ENCODE measurements at regions of chr1 and their contacts with region 1.

Region 1: GRCh38 chr1:40315239-40315794 is 1.8 kb downstream of the COL9A2 start:
- DNase-seq: peak; percentile 81
- H3K4me3 Mint-ChIP-seq: peak overlapping the region; percentile 61
- H3K27ac Mint-ChIP-seq: peak overlapping the region; percentile 26
- H3K4me1 Mint-ChIP-seq: peaks cover 54% of the 10 kb centered on the region
- H3K27me3 Mint-ChIP-seq: peaks cover 25% of the 10 kb centered on the region

Region 2: DNA sequence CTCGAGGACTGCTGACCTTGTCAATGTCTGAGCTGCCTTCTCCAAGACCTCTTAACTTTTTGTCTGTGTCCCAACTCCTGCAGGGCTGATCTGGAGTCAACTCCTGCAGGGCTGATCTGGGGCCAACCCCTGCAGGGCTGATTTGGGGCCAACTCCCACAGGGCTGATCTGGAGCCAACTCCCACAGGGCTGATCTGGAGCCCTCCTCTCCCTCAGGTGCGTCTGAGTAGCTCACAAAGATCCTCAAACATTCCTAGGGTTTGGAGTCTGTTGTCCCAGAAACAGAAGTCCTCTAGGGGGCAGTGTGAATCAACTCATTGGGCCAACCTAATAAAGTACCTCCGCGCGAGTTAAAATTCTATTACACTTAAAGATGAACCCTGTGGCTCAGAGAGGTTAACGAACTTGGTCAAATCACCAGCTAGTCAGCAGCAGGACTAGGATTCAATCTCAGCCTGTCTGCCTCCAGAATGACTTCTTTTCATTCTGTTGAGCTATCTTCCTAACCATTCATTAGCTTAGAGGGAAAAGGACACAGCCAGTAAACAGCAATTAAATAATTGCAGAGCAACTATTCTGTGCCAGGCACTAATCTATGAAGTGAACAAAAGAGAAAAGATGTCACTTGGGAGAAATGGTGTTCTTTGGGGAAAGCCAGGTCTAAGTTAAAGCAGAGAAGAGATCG is 171.3 kb before region 1 on chr1:
- CTCF ChIA-PET with region 1: interaction called, 12 read pairs
- POLR2A ChIA-PET with region 1: no interaction called
- DNase-seq: peak; percentile 71
- H3K4me3 Mint-ChIP-seq: no peak overlapping the region
- H3K27ac Mint-ChIP-seq: no peak overlapping the region
- H3K4me1 Mint-ChIP-seq: peaks cover 11% of the 10 kb centered on the region
- H3K27me3 Mint-ChIP-seq: peaks cover 36% of the 10 kb centered on the region

Region 3: DNA sequence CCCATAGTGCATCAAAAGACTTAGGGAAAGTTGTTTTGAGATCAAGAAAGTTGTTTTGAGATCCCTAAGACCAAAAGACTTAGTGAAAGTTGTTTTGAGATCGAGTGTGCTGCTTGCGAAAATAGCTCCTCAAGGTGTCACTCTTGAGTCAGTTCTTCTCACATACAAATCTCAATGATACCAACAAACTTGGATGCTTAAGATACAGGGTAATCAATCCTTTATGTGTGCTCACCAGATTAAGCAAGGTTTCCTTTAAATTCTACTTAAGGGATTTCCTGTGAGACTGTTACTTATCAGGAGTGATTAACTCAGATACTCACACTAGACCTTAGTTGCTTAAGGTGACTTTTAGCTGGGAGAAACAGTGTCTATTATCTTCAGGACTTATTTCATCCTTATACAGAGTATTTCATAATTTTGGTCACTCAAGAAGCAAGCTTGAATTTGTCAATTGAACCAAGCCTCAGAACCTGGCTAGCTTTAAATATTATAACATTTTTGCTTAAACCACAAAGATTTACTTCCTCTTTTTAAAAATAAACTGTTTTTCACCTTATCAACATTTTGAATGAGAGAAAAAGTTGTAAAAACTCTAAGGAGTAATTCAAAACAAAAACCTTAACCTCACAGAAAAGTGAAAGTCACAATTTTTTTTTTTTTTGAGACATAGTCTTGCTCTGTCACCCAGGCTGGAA is 162.1 kb before region 1 on chr1:
- CTCF ChIA-PET with region 1: interaction called, 29 read pairs
- POLR2A ChIA-PET with region 1: no interaction called
- DNase-seq: peak; percentile 64
- H3K4me3 Mint-ChIP-seq: no peak overlapping the region
- H3K27ac Mint-ChIP-seq: no peak overlapping the region
- H3K4me1 Mint-ChIP-seq: peaks cover 10% of the 10 kb centered on the region
- H3K27me3 Mint-ChIP-seq: peaks cover 2% of the 10 kb centered on the region

Region 4: DNA sequence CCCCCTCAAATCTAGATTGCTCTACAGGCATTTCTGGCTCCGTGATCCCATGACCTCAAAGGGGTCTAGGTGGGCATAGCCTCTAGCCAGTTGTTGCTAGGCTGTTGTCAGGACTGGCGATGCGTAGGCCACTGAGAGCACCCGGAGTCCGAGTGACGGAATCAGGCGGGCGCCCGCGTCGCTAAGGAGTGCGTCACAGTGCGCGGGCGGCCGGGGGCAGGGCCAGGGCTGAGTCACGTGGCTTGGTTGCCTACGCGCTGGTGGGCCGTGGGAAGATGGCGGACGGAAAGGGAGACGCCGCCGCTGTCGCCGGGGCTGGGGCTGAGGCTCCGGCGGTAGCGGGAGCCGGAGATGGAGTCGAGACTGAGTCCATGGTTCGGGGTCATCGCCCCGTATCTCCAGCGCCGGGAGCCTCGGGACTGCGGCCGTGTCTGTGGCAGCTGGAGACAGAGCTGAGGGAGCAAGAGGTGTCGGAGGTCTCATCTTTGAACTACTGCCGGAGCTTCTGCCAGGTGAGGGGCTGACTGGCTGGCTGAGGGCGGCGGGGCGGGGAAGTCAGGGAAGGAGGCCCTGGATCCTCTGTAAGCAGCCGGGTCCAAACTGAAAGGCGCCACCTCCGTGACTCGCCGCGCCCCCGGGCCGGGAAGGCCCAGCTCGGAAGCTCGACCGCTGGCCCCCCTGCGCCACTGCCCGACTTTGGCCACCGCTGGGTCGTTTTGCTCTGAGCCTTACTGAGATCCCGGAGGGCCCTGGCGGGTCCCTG is 154.0 kb before region 1 on chr1 and contains the start of gene RLF:
- CTCF ChIA-PET with region 1: interaction called, 14 read pairs
- POLR2A ChIA-PET with region 1: no interaction called
- DNase-seq: peak; percentile 95
- H3K4me3 Mint-ChIP-seq: peak within 1 kb of the TSS; percentile 4
- H3K27ac Mint-ChIP-seq: no peak within 1 kb of the TSS
- H3K4me1 Mint-ChIP-seq: peaks cover 31% of the 10 kb centered on the region
- H3K27me3 Mint-ChIP-seq: no peaks in the 10 kb centered on the region
- total RNA-seq, gene RLF: 19.2 to 21.6 TPM

Region 5: DNA sequence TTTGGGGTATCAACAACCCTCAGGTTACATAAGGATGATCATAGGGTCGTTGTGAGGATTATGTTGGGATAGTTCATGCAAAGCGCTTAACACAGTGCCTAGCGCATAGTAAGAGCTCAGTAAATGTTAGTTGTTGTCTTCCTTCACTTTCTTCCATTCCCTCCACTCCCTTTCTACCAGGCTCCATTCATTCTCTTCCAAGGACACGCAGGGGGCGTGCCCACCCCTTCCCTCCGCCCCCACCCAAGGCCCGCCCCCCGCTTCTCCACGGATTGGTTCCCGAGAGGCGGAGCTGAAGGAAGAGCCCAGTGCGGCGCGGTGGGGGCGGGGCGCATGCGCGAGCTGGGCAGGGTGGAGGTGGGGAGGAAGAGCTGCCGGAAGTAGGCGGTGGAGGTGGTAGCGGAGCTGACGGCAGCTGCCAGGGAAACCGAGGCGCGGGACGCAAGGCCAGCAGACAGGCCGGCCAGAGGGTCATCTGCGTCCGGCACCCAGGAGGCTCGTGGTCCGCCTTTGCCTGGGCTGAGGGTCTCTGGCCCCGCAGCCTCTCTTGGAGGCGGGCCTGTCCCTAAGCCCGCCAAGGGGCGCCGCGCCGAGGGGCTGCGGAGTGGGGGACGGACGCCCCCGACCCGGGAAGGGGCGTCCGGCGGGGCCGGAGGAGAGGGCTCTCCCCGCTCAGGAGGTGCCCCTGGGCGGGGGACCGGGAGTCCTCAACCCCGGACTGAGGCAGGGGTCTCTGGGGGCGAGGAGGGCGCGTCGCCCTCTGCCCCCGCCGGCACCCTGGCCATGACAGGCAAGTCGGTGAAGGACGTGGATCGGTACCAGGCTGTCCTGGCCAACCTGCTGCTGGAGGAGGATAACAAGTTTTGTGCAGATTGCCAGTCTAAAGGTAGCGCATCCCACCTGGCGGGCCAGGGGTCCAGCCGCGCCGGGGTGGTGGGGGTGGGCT is 58.3 kb after region 1 on chr1 and contains the start of gene SMAP2:
- CTCF ChIA-PET with region 1: no interaction called
- POLR2A ChIA-PET with region 1: no interaction called
- DNase-seq: peak; percentile 95
- H3K4me3 Mint-ChIP-seq: peak within 1 kb of the TSS; percentile 100
- H3K27ac Mint-ChIP-seq: peak within 1 kb of the TSS; percentile 98
- H3K4me1 Mint-ChIP-seq: peaks cover 44% of the 10 kb centered on the region
- H3K27me3 Mint-ChIP-seq: peaks cover 2% of the 10 kb centered on the region
- total RNA-seq, gene SMAP2: 115 to 140 TPM

Region 6: GRCh38 chr1:40421431-40422384 is 106.4 kb after region 1 on chr1:
- CTCF ChIA-PET with region 1: no interaction called
- POLR2A ChIA-PET with region 1: no interaction called
- DNase-seq: no peak
- H3K4me3 Mint-ChIP-seq: no peak overlapping the region
- H3K27ac Mint-ChIP-seq: peak overlapping the region; percentile 26
- H3K4me1 Mint-ChIP-seq: peaks cover 10% of the 10 kb centered on the region
- H3K27me3 Mint-ChIP-seq: no peaks in the 10 kb centered on the region